Naive thymus-derived CD4-positive, alpha-beta T cell (primary cell): ENCODE measurements at regions of chr2 and their contacts with region 1.

Region 1: DNA sequence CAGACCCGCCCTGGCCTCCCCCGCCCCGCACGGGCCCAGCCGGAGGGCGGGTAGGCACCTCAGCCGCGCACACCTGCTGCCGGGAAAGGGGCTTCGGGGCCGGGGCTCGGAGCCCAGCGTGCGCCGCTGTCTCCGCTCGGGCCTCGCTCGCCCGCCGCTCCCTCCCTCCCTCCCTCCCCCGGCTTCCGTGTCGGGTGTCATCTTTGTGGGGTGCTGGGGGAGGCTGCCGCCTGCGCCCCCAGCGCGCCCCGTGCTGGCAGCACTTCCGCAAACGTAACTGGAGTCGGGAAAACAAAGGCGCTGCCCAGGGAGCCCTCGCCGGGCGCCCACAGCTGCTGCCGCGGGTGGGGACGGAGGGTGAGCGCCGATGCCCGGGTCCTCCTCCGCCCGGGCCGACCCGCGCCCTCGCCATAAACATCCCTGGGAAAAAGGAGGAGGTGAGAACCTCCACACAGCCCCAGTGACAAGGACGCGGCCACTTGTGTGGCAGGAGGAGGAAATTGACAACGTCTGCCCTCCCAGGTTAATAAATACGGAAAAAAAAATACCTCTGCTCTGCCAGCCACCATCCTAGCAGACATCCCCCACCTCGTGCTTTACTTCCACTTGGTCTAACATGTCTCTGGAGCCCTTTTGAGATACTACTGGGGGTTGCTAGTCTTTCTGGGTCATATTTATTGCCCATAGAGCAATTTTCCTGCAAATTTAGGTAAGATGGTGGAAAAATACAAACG is 550 bp downstream of the MFSD6 start:
- DNase-seq: peak in 8 of 9 donors; percentile 69 to 86 (median 82)
- ATAC-seq: peak; percentile 68
- H3K4me3 ChIP-seq: peak overlapping the region; percentile 76
- H3K4me3 Mint-ChIP-seq: peak overlapping the region; percentile 87 to 95 (median 92)
- H3K27ac ChIP-seq: peak overlapping the region; percentile 100
- H3K27ac Mint-ChIP-seq: peak overlapping the region; percentile 94 to 98 (median 98)
- H3K4me1 ChIP-seq: peaks cover 28 to 41% of the 10 kb centered on the region in 2 donors
- H3K4me1 Mint-ChIP-seq: peaks cover 29 to 52% (median 45%) of the 10 kb centered on the region in 7 donors
- H3K27me3 ChIP-seq: no peaks in the 10 kb centered on the region
- H3K27me3 Mint-ChIP-seq: no peaks in the 10 kb centered on the region

Region 2: DNA sequence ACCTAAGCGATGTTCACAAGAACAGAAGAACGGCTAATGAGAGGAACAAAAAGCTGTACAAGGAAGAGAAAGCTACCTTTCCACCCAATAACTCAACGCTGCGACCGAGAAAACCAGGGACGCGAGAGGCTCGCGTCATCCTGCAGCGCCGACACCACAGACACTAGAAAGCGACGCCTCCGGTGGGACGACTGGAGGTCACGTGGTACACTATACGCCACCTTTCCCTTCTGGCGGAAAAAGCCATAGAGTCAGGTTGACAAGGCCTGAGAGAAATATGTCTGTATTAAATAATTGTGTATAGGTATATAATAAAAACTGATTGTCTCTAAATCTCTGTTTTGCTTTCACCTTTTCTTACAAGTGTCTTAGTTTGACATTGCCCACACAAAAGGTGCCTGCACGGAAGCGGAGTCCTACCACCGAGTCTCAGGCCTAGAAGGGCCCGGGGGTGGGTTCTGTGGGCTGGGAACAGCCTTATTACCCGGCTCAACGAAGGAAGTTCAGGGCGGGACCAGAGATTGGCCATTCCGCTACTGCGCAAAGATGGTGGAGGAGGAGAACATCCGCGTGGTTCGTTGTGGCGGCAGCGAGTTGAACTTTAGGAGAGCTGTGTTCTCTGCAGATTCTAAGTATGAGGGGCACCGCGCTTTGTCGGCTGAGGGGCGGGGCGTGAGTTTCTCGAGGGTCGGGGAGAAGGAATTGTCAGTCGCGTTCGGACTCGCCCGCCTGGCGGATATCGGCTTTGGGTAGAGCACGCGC is 967.6 kb before region 1 on chr2 and contains the start of gene WDR75:
- CTCF ChIA-PET with region 1: no interaction called
- POLR2A ChIA-PET with region 1: interaction called, 3 read pairs
- intact Hi-C with region 1: loop called (anchors 1 to 2 kb)
- DNase-seq: peak; percentile 73 to 96 (median 94)
- ATAC-seq: peak; percentile 97
- H3K4me3 ChIP-seq: peak within 1 kb of the TSS; percentile 83
- H3K4me3 Mint-ChIP-seq: peak within 1 kb of the TSS in 6 of 10 donors; percentile 99 to 100 (median 100)
- H3K27ac ChIP-seq: peak within 1 kb of the TSS; percentile 92
- H3K27ac Mint-ChIP-seq: peak within 1 kb of the TSS in 8 of 9 donors; percentile 97 to 100 (median 100)
- H3K4me1 ChIP-seq: peaks cover 10 to 14% of the 10 kb centered on the region in 2 donors
- H3K4me1 Mint-ChIP-seq: peaks cover 3 to 13% (median 8%) of the 10 kb centered on the region in 7 donors
- H3K27me3 ChIP-seq: no peaks in the 10 kb centered on the region
- H3K27me3 Mint-ChIP-seq: peaks cover 0 to 10% (median 0%) of the 10 kb centered on the region in 5 donors
- total RNA-seq, gene WDR75: 39.9 to 67.4 (median 60.7) TPM

Region 3: DNA sequence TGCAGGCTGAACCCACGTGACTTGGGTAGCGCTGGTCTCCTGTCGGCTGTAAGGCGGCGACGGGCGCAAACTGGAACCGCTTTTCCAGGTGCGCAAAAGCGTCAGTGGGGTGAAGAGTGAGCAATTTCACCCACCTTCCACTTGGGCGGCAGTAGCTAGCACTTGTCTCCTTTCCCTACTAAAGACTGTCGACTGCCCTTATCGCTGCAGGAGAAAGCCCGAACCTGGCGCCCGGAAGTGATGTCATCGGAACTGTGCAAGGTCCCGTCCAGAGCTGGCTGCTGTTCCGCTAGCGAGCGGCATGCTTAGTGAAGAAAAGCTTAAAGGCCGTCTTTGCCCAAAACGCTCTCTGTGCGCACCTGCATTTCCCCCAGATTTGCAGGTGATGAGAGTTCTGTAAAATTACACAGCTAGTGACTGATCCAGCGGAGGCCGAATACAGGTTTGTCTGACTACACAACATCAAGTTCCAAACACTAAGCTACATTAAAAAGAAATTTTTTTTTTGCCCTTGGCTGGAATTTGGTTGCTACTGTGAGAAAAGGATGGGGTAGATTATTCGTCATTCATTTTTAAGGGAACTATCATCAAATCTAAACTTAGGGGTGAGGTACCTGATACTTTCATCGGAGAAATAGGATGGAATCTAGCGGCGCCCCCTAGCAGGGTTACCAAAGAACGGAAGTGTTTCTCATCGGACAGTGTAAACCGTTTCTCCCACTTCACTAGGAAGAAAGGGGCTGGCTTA is 646.0 kb before region 1 on chr2 and contains the start of gene OSGEPL1:
- CTCF ChIA-PET with region 1: no interaction called
- POLR2A ChIA-PET with region 1: no interaction called
- intact Hi-C with region 1: loop called (anchors 1 kb)
- DNase-seq: peak; percentile 72 to 95 (median 88)
- ATAC-seq: peak; percentile 95
- H3K4me3 ChIP-seq: peak within 1 kb of the TSS; percentile 88
- H3K4me3 Mint-ChIP-seq: peak within 1 kb of the TSS; percentile 88 to 98 (median 94)
- H3K27ac ChIP-seq: peak within 1 kb of the TSS; percentile 89
- H3K27ac Mint-ChIP-seq: peak within 1 kb of the TSS; percentile 94 to 98 (median 96)
- H3K4me1 ChIP-seq: peaks cover 6 to 10% of the 10 kb centered on the region in 2 donors
- H3K4me1 Mint-ChIP-seq: peaks cover 4 to 18% (median 9%) of the 10 kb centered on the region in 7 donors
- H3K27me3 ChIP-seq: no peaks in the 10 kb centered on the region
- H3K27me3 Mint-ChIP-seq: no peaks in the 10 kb centered on the region
- total RNA-seq, gene OSGEPL1: 6.8 to 24.2 (median 7.2) TPM

Region 4: GRCh38 chr2:190360561-190360960 is 48.1 kb before region 1 on chr2:
- CTCF ChIA-PET with region 1: no interaction called
- POLR2A ChIA-PET with region 1: interaction called, 8 read pairs
- intact Hi-C with region 1: loop called in 1 of 2 experiments (anchors 1 kb)
- DNase-seq: no peak
- ATAC-seq: no peak
- H3K4me3 ChIP-seq: peak overlapping the region; percentile 61
- H3K4me3 Mint-ChIP-seq: peak overlapping the region; percentile 56 to 99 (median 92)
- H3K27ac ChIP-seq: peak overlapping the region; percentile 71
- H3K27ac Mint-ChIP-seq: peak overlapping the region; percentile 42 to 97 (median 94)
- H3K4me1 ChIP-seq: peaks cover 0 to 3% of the 10 kb centered on the region in 2 donors
- H3K4me1 Mint-ChIP-seq: peaks cover 10 to 39% (median 26%) of the 10 kb centered on the region in 7 donors
- H3K27me3 ChIP-seq: no peaks in the 10 kb centered on the region
- H3K27me3 Mint-ChIP-seq: no peaks in the 10 kb centered on the region

Region 5: GRCh38 chr2:190648289-190649034 is 239.8 kb after region 1 on chr2:
- CTCF ChIA-PET with region 1: interaction called, 3 read pairs
- POLR2A ChIA-PET with region 1: interaction called, 7 read pairs
- intact Hi-C with region 1: loop called (anchors 1 kb)
- DNase-seq: peak; percentile 83 to 93 (median 89)
- ATAC-seq: peak; percentile 91
- H3K4me3 ChIP-seq: peak overlapping the region; percentile 62
- H3K4me3 Mint-ChIP-seq: peak overlapping the region; percentile 76 to 92 (median 88)
- H3K27ac ChIP-seq: peak overlapping the region; percentile 92
- H3K27ac Mint-ChIP-seq: peak overlapping the region; percentile 15 to 98 (median 90)
- H3K4me1 ChIP-seq: peaks cover 10 to 16% of the 10 kb centered on the region in 2 donors
- H3K4me1 Mint-ChIP-seq: peaks cover 10 to 54% (median 47%) of the 10 kb centered on the region in 7 donors
- H3K27me3 ChIP-seq: no peaks in the 10 kb centered on the region
- H3K27me3 Mint-ChIP-seq: no peaks in the 10 kb centered on the region

Region 6: DNA sequence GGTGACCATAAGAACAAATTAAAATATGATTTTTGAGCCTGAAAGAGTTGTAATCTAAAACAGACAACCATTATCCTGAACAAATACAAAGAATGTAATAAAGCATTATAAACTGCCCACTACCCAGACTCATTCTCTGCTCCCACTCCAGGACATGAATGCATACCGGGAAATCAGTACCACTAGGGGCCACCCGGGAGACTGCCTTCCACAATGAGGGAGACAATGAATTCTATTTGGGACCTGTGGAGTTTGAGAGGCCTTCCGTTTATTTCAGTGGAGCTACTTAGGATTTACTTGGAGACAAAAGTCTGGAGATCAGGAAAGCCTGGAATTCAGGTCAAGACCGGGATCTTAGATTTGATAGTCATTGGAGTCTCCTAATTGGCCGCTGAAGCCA is 290.2 kb after region 1 on chr2:
- CTCF ChIA-PET with region 1: no interaction called
- POLR2A ChIA-PET with region 1: no interaction called
- intact Hi-C with region 1: no loop called
- DNase-seq: no peak
- ATAC-seq: no peak
- H3K4me3 ChIP-seq: no peak overlapping the region
- H3K4me3 Mint-ChIP-seq: no peak overlapping the region
- H3K27ac ChIP-seq: no peak overlapping the region
- H3K27ac Mint-ChIP-seq: no peak overlapping the region
- H3K4me1 ChIP-seq: no peaks in the 10 kb centered on the region
- H3K4me1 Mint-ChIP-seq: peaks cover 0 to 13% (median 0%) of the 10 kb centered on the region in 7 donors
- H3K27me3 ChIP-seq: no peaks in the 10 kb centered on the region
- H3K27me3 Mint-ChIP-seq: no peaks in the 10 kb centered on the region

Region 7: GRCh38 chr2:191617575-191617974 is 1208.9 kb after region 1 on chr2:
- CTCF ChIA-PET with region 1: no interaction called
- POLR2A ChIA-PET with region 1: no interaction called
- intact Hi-C with region 1: loop called in 1 of 2 experiments (anchors 5 kb)
- DNase-seq: peak in 8 of 9 donors; percentile 47 to 89 (median 84)
- ATAC-seq: peak; percentile 92
- H3K4me3 ChIP-seq: peak overlapping the region; percentile 11
- H3K4me3 Mint-ChIP-seq: peak overlapping the region; percentile 0 to 71 (median 40)
- H3K27ac ChIP-seq: peak overlapping the region; percentile 84
- H3K27ac Mint-ChIP-seq: peak overlapping the region; percentile 80 to 98 (median 89)
- H3K4me1 ChIP-seq: peaks cover 21 to 22% of the 10 kb centered on the region in 2 donors
- H3K4me1 Mint-ChIP-seq: peaks cover 31 to 59% (median 51%) of the 10 kb centered on the region in 7 donors
- H3K27me3 ChIP-seq: no peaks in the 10 kb centered on the region
- H3K27me3 Mint-ChIP-seq: no peaks in the 10 kb centered on the region